ENCODE measurements at regions of chr16 and their contacts with region 1.

Region 1: GRCh38 chr16:81035398-81035974 is at the start of gene ATMIN:
- DNase-seq: peak; percentile 93
- ATAC-seq: peak; percentile 91
- H3K4me3 Mint-ChIP-seq: peak within 1 kb of the TSS; percentile 80
- H3K27ac Mint-ChIP-seq: peak within 1 kb of the TSS; percentile 48
- H3K4me1 Mint-ChIP-seq: peaks cover 30% of the 10 kb centered on the region
- H3K27me3 Mint-ChIP-seq: no peaks in the 10 kb centered on the region
- total RNA-seq, gene ATMIN: 20.3 to 31.2 TPM

Region 2: DNA sequence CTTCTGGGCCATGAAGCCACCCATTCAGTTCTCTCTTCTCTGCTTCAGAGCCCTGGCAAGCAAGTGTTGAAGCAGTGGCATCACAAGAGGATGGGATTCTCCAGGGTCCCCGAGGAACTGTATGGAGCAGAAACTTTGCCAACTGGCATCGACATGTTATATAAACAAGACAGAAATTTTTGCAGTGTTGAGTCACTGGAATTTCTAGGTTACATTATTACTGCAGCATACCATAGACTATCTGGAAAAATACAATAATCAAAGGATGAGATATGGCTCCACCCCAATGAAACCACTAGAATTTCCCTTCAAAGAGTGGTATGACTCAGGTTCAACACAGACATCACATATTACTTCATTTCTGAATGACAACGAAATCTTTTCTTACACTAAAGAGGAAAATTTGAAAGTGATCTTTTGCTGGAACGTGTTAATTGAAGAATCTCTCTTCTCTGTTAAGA is 837.7 kb before region 1 on chr16:
- CTCF ChIA-PET with region 1: no interaction called
- POLR2A ChIA-PET with region 1: no interaction called
- intact Hi-C with region 1: no loop called
- DNase-seq: peak; percentile 10
- ATAC-seq: peak; percentile 94
- H3K4me3 Mint-ChIP-seq: no peak overlapping the region
- H3K27ac Mint-ChIP-seq: peak overlapping the region; percentile 34
- H3K4me1 Mint-ChIP-seq: peaks cover 14% of the 10 kb centered on the region
- H3K27me3 Mint-ChIP-seq: peaks cover 31% of the 10 kb centered on the region

Region 3: GRCh38 chr16:80924372-80924978 is 111.0 kb before region 1 on chr16:
- CTCF ChIA-PET with region 1: no interaction called
- POLR2A ChIA-PET with region 1: no interaction called
- intact Hi-C with region 1: loop called in 1 of 2 experiments (anchors 2 kb)
- DNase-seq: peak; percentile 76
- ATAC-seq: peak; percentile 71
- H3K4me3 Mint-ChIP-seq: no peak overlapping the region
- H3K27ac Mint-ChIP-seq: no peak overlapping the region
- H3K4me1 Mint-ChIP-seq: no peaks in the 10 kb centered on the region
- H3K27me3 Mint-ChIP-seq: peaks cover 17% of the 10 kb centered on the region

Region 4: GRCh38 chr16:81018496-81018895 is 17.0 kb before region 1 on chr16:
- CTCF ChIA-PET with region 1: interaction called, 10 read pairs
- POLR2A ChIA-PET with region 1: no interaction called
- intact Hi-C with region 1: no loop called
- DNase-seq: no peak
- ATAC-seq: no peak
- H3K4me3 Mint-ChIP-seq: no peak overlapping the region
- H3K27ac Mint-ChIP-seq: no peak overlapping the region
- H3K4me1 Mint-ChIP-seq: peaks cover 2% of the 10 kb centered on the region
- H3K27me3 Mint-ChIP-seq: no peaks in the 10 kb centered on the region

Region 5: GRCh38 chr16:81077076-81077940 is 41.8 kb after region 1 on chr16 and contains the start of gene C16orf46:
- CTCF ChIA-PET with region 1: interaction called, 51 read pairs
- POLR2A ChIA-PET with region 1: interaction called, 10 read pairs
- intact Hi-C with region 1: loop called (anchors 1 kb)
- DNase-seq: peak; percentile 99
- ATAC-seq: peak; percentile 86
- H3K4me3 Mint-ChIP-seq: no peak within 1 kb of the TSS
- H3K27ac Mint-ChIP-seq: peak within 1 kb of the TSS; percentile 84
- H3K4me1 Mint-ChIP-seq: peaks cover 7% of the 10 kb centered on the region
- H3K27me3 Mint-ChIP-seq: no peaks in the 10 kb centered on the region
- total RNA-seq, gene C16orf46: 0.28 to 0.34 TPM

Region 6: DNA sequence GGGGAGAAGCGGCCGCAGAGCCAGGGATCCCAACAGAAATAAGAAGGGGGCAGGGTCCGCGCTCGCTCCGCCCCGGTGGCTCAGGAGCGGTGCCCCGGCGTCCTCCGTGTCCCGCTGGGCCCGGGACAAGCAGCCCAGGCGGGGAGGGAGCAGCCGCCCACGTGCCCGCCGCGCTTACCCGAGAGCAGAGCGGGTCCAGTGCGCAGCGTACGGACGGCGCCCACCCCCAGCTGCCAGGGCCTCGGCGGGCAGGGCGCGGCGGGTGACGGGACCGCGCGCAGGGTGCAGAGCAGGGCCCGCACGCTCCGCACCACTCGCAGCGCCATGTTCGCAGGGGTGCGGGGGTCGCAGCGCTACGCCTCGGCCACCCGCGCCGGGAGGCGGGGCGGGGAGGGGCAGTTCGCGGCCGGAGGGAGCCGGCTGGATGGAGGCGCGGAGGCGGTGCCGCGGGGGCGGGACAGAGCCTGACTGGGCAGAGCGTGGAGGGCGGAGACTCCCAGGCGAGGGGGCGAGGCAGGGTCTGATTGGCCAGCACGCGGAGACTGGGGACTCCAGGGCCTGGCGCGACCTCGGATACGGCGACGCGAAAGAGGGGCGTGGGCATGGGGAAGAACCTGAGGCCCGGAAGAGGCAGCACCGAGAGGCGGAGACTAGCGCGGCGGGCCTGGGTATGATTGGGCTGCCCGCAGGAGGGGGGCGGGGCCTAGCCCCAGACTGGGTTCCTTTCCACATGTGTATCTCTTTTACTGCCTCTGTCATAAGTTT is 60.6 kb after region 1 on chr16 and contains the start of gene GCSH:
- CTCF ChIA-PET with region 1: no interaction called
- POLR2A ChIA-PET with region 1: no interaction called
- intact Hi-C with region 1: loop called (anchors 1 kb)
- DNase-seq: peak; percentile 99
- ATAC-seq: peak; percentile 99
- H3K4me3 Mint-ChIP-seq: peak within 1 kb of the TSS; percentile 72
- H3K27ac Mint-ChIP-seq: peak within 1 kb of the TSS; percentile 78
- H3K4me1 Mint-ChIP-seq: peaks cover 16% of the 10 kb centered on the region
- H3K27me3 Mint-ChIP-seq: no peaks in the 10 kb centered on the region
- total RNA-seq, gene GCSH: 22.2 to 24.9 TPM

Region 7: DNA sequence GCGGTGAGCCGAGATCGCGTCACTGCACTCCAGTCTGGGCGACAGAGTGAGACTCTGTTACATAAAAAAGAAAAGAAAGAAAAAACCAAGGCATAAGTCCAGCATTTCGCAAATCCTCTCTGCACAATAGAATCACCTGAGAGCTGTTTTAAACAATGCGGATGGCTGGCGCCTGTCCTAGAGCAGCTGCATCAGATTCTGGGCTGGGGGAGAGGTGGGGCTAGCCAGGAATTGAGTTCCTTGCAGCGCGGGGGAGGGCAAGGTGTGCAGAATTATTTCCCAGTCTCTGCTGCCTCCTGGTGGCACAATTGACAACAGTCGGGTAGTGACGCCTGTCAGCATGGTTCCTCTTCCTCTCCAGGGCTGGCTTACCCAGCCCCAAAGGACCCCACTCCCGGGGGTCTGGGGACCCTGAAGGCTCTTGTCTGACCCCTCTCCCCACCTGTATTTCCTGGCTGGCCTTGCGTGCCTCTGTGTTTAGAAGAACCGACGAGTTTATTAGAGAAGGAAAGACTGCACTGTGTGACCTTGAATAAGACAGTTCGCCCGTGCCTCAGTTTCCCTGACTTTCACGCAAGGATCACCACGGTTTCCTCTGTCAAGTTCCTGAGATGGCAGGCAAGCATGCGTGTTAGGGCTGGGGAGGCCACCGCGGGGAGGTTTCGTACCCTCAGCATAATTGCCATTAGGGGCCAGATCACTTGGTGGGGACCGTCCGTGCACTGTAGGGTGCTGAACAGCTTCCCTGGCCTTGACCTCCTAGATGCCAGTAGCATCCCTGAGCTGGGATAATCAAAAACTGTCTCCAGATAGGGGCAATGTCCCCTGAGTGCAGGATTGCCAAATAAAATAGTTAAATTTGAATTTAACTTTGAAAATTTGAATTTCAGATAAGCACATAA is 702.6 kb after region 1 on chr16:
- CTCF ChIA-PET with region 1: interaction called, 3 read pairs
- POLR2A ChIA-PET with region 1: no interaction called
- intact Hi-C with region 1: loop called in 1 of 2 experiments (anchors 2 kb)
- DNase-seq: peak; percentile 93
- ATAC-seq: peak; percentile 98
- H3K4me3 Mint-ChIP-seq: peak overlapping the region; percentile 55
- H3K27ac Mint-ChIP-seq: peak overlapping the region; percentile 51
- H3K4me1 Mint-ChIP-seq: no peaks in the 10 kb centered on the region
- H3K27me3 Mint-ChIP-seq: no peaks in the 10 kb centered on the region

Region 8: GRCh38 chr16:81745704-81746558 is 710.4 kb after region 1 on chr16:
- CTCF ChIA-PET with region 1: no interaction called
- POLR2A ChIA-PET with region 1: no interaction called
- intact Hi-C with region 1: loop called in 1 of 2 experiments (anchors 5 kb)
- DNase-seq: peak; percentile 85
- ATAC-seq: peak; percentile 91
- H3K4me3 Mint-ChIP-seq: peak overlapping the region; percentile 73
- H3K27ac Mint-ChIP-seq: peak overlapping the region; percentile 87
- H3K4me1 Mint-ChIP-seq: peaks cover 16% of the 10 kb centered on the region
- H3K27me3 Mint-ChIP-seq: no peaks in the 10 kb centered on the region

Measured in activated CD4-positive, alpha-beta T cell treated with anti-CD3 and anti-CD28 coated beads for 36 hours (primary cell).